ENCODE measurements at regions of chr6 and their contacts with region 1.

Region 1: DNA sequence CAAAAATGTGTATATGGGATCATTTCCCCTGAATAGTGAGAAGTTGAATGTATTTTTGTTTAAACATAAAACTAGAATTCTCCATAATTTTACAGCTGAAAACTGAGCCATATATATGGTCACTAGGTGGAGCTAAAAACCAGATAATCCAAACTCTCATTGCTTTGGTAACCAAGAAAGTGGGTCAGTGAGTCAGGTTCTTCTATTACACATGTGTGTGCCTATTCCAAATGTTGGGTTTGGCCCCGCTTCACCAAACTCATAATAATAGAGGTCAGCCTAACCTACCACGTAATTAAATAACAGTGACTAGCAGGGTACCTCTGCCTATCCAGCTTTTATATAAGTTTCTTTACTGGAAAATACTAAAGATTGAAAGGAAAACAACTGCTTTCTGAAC is 19.3 kb upstream of the RNGTT start:
- DNase-seq: peak; percentile 47
- H3K4me3 ChIP-seq: no peak overlapping the region
- H3K27me3 ChIP-seq: peaks cover 2% of the 10 kb centered on the region; the same call in 1 of the 2 replicates
- CTCF ChIP-seq: peak; percentile 63

Region 2: GRCh38 chr6:88963139-88964090 is 19.3 kb before region 1 on chr6 and contains the start of gene RNGTT:
- CTCF ChIA-PET with region 1: interaction called, 11 read pairs
- POLR2A ChIA-PET with region 1: no interaction called
- DNase-seq: peak; percentile 81
- H3K4me3 ChIP-seq: peak within 1 kb of the TSS; percentile 99
- H3K27me3 ChIP-seq: no peaks in the 10 kb centered on the region
- CTCF ChIP-seq: 0 out of 2 replicates have a peak, but pooled peaks have one; percentile 22
- polyA plus RNA-seq, gene RNGTT: 3.2 and 6.5 TPM in 2 replicates

Region 3: GRCh38 chr6:88992741-88993552 is 10.2 kb after region 1 on chr6:
- CTCF ChIA-PET with region 1: interaction called, 12 read pairs
- POLR2A ChIA-PET with region 1: no interaction called
- DNase-seq: no peak
- H3K4me3 ChIP-seq: no peak overlapping the region
- H3K27me3 ChIP-seq: no peaks in the 10 kb centered on the region
- CTCF ChIP-seq: no peak

Region 4: DNA sequence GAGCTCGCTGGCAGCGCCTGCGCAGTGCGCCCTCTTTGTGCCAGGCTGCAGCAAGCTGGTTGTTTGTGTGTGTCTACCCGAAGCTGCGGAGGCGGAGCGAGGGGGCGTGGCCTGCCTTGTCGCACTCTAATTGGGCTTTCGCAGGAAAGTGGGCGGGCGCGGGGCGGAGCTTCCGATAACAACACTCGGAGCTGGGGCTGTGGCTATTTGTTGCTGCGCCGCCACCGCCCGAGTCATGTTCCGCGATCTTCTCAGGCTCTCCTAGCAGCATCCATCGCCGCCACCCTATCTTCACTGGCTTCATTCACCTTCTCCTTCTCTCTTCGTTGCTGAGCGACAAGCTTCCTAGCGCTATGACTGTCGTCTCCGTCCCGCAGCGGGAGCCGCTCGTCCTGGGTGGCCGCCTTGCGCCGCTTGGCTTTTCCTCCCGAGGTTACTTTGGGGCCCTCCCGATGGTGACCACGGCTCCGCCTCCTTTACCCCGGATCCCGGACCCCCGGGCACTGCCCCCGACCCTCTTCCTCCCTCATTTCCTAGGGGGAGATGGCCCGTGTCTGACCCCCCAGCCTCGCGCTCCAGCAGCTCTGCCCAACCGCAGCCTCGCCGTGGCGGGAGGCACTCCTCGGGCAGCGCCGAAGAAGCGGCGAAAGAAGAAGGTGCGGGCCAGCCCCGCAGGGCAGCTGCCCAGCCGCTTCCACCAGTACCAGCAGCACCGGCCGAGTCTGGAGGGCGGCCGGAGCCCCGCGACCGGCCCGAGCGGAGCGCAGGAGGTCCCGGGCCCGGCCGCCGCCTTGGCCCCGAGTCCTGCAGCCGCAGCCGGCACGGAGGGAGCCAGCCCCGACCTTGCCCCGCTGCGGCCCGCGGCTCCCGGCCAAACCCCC is 98.1 kb after region 1 on chr6 and contains the start of gene PNRC1:
- CTCF ChIA-PET with region 1: interaction called, 19 read pairs
- POLR2A ChIA-PET with region 1: no interaction called
- DNase-seq: peak; percentile 96
- H3K4me3 ChIP-seq: peak within 1 kb of the TSS; percentile 100
- H3K27me3 ChIP-seq: no peaks in the 10 kb centered on the region
- CTCF ChIP-seq: no peak
- polyA plus RNA-seq, gene PNRC1: 5.6 and 9.8 TPM in 2 replicates

Region 5: DNA sequence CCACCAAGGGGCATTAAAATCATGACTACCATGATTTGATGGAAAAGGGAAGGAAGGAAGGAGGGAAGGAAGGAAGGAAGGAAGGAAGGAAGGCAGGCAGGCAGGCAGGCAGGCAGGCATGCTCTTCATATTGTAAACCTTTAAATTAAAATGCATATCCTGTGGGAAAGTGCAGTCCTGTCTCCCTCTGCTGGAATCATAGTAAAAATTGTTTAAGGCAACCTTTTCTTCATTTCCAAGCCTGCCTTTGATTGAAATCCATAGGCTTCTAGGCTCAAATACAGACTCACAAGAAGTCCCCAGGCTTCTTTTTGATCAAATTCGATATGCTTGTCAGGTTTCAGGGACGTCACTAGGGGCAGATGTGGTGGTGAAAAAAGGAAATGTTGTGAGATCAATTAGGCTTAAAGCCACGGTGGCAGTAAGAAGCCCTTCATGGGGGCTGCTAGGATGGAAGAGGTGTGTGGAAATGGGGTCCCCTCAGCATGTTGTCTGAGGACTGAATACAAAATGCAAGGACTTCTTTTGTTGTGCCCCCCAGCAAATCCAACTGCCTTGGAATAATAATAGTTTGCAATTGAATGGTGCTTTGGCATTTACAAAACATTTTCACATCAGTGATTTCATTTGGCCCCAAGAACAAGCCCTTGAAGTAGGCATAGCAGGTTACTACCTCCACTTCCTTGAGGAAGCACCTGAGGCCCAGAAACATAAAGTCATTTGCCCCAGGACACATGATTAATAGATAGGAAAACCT is 260.0 kb after region 1 on chr6:
- CTCF ChIA-PET with region 1: interaction called, 95 read pairs
- POLR2A ChIA-PET with region 1: interaction called, 3 read pairs
- DNase-seq: no peak
- H3K4me3 ChIP-seq: no peak overlapping the region
- H3K27me3 ChIP-seq: peaks cover 2% of the 10 kb centered on the region; the same call in 1 of the 2 replicates
- CTCF ChIP-seq: peak; percentile 55